ENCODE measurements at regions of chr2 and their contacts with region 1.

Region 1: DNA sequence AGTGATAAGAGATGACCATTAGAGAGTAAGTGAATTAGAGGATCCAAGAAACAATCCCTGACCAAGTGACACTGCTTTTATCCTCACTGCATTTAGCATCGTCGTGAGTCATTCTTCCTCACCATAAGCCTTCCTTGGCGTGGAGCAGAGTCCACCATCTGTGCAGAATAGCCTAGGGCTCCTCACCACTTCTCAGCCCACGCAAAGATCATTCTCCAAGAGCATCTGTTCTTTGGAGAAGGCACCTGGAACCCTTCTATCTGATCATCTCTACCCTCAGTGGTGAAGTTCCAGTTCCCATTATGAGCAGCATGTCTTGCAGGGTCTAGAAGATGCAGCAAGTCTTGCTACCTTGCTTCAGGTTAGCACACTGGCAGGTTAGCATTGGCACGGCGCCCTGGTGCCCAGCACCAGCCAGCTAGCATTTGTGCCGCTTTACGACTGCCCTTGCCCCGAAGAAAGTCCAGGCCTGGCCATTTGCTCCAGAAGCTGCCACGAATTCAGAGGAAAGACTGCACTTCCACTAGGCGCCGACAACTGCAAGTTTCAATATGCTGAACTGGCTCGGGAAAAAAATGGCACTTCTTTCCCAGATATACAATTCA is 225.8 kb downstream of the TTC32 start:
- DNase-seq: no peak
- H3K4me3 ChIP-seq: no peak overlapping the region
- H3K4me3 Mint-ChIP-seq: no peak overlapping the region
- H3K27ac Mint-ChIP-seq: no peak overlapping the region
- H3K4me1 ChIP-seq: peaks cover 7% of the 10 kb centered on the region; the same call in 1 of the 2 replicates
- H3K4me1 Mint-ChIP-seq: peaks cover 6% of the 10 kb centered on the region
- H3K27me3 ChIP-seq: no peaks in the 10 kb centered on the region
- H3K27me3 Mint-ChIP-seq: no peaks in the 10 kb centered on the region
- CTCF ChIP-seq: no peak

Region 2: DNA sequence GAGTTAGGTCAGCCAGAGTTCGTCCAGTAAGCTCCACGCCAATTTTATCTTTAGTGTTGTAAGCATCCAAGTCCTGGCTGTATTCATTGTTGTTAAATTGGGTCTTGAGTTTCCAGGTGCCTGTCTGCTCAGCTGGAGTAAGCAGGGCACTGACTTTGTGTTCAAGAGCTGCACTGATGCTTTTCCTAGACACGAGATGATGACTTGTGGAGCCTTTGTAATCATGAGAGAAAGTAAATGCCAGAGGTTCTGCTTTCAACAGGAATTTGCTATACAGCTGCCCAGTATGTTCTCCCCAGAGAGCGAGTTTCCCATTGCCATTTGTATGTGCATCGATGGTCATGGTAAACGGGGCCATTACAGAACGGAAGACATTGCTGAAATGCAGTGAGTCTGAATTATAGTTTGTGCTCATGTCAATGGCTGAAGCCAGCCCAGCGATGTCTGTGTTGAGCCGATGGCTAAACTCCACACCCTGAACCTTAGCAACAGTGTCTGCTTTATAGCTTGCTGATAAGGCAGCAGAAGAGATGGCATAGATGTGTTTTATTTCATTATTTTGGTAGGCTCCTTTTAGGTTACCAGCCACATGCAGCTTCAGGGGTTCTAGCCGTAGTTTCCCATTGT is 1335.0 kb after region 1 on chr2:
- CTCF ChIA-PET with region 1: no interaction called
- POLR2A ChIA-PET with region 1: no interaction called
- intact Hi-C with region 1: loop called (anchors 5 kb)
- DNase-seq: no peak
- H3K4me3 ChIP-seq: no peak overlapping the region
- H3K4me3 Mint-ChIP-seq: no peak overlapping the region
- H3K27ac Mint-ChIP-seq: no peak overlapping the region
- H3K4me1 ChIP-seq: no peaks in the 10 kb centered on the region
- H3K4me1 Mint-ChIP-seq: no peaks in the 10 kb centered on the region
- H3K27me3 ChIP-seq: no peaks in the 10 kb centered on the region
- H3K27me3 Mint-ChIP-seq: no peaks in the 10 kb centered on the region
- CTCF ChIP-seq: no peak